ENCODE measurements at regions of chr19 and their contacts with region 1.

Region 1: DNA sequence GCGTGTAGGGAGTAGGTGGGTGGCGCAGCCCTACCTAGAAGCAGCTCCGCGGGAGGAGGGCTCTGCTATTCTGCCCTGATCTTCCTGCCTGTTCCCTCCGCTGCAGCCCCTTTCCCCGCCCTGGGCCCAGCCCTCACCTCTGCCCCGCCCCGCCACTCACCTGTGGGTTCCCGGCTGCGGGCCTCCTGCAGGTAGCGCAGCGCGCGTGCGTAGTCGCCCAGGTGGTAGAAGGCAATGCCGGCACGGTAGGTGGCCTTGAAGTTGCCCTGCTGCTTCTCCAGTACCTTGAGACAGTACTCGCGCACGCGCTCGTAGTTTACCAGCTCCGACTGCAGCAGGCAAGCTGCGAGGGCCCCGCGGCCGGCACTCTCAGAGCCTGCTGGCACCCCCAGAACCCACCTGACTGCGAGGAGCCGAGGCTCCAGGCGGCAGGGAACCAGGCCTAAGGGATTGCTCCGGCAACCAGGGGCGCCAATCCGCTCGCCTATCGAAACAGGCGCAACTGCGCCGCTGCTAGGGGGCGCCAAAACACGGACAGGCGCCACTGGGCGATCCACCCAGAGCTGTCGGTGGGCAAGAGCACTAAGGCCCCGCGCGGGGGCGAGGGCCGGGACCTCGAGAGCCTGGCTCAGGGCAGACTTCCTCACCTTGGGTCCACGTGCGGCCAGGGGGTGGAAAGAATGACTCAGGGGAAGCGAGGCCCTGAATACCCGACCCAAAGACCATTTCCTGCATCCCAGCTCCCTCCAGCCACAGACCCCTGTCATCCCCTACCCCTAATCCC is 965 bp downstream of the TTC9B start:
- DNase-seq: peak; percentile 82
- ATAC-seq: peak; percentile 60
- H3K4me3 Mint-ChIP-seq: peak overlapping the region; percentile 50
- H3K27ac Mint-ChIP-seq: no peak overlapping the region
- H3K4me1 Mint-ChIP-seq: peaks cover 11% of the 10 kb centered on the region
- H3K27me3 Mint-ChIP-seq: peaks cover 44% of the 10 kb centered on the region
- CTCF ChIP-seq: peak; percentile 65

Region 2: DNA sequence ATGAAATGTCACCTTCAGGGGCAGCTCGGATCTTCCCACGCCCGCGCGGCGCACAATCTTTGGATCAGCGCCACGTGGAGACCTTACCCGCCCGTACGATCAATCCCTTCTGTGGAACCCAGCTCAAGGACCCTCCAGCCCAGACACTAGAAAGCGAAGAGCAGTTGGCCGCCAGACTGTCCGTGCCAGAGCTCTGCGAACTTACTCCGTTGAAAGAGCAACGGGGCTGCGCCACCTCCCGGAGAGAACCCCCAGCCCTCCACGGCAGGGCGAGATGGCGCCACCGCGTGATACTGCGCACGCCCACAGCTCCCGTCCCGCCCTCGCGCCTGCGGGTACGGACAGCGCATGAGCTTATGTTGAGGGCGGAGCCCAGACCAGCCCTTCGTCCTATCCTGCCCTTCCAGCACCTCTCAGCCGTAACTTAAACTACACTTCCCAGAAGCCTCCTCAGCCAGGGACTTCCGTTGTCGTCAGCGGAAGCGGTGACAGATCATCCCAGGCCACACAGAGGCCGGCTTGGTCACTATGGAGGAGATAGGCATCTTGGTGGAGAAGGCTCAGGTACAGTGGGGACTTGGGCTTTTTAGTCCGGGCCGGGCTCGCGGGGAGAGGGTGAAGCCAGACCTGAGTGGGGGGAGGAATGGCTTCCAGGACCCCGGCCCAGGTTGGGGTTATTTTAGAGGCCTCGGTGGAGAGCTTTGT is 246.4 kb before region 1 on chr19 and contains the start of gene PSMC4:
- CTCF ChIA-PET with region 1: interaction called, 16 read pairs
- POLR2A ChIA-PET with region 1: no interaction called
- DNase-seq: peak; percentile 97
- ATAC-seq: peak; percentile 100
- H3K4me3 Mint-ChIP-seq: peak within 1 kb of the TSS; percentile 97
- H3K27ac Mint-ChIP-seq: peak within 1 kb of the TSS; percentile 96
- H3K4me1 Mint-ChIP-seq: peaks cover 25% of the 10 kb centered on the region
- H3K27me3 Mint-ChIP-seq: no peaks in the 10 kb centered on the region
- CTCF ChIP-seq: no peak
- total RNA-seq, gene PSMC4: 96.7 to 105 TPM (median 97.2 TPM) in 3 replicates

Region 3: GRCh38 chr19:40119380-40119779 is 97.8 kb before region 1 on chr19:
- CTCF ChIA-PET with region 1: no interaction called
- POLR2A ChIA-PET with region 1: no interaction called
- DNase-seq: no peak
- ATAC-seq: no peak
- H3K4me3 Mint-ChIP-seq: no peak overlapping the region
- H3K27ac Mint-ChIP-seq: no peak overlapping the region
- H3K4me1 Mint-ChIP-seq: no peaks in the 10 kb centered on the region
- H3K27me3 Mint-ChIP-seq: peaks cover 14% of the 10 kb centered on the region
- CTCF ChIP-seq: no peak

Region 4: DNA sequence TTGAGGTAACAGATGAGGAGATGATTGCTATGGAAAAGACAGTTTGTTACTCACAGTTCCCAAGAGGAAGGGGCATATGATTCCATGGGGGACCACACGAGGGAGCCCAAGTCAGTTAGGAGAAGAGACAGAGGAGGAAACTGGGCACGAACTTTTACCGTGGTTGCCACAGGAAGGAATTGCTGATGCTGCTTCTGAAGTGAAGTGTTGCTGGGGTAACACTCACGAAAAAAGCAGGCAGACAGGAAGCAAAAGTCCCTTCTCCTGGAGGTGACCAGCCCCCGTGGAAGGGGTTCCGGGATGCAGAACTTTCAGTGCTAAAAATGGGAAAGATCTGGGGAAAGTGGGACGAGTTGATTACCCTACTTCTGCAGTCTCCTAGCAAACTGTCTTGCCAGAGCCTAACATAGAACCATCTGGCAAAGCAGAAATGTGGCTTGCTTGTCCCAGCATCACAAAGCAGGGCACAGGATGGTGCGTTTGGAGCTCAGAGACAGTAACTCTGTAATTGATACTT is 61.4 kb before region 1 on chr19:
- CTCF ChIA-PET with region 1: interaction called, 16 read pairs
- POLR2A ChIA-PET with region 1: no interaction called
- DNase-seq: peak; percentile 28
- ATAC-seq: peak; percentile 41; the same call in 1 of the 2 replicates
- H3K4me3 Mint-ChIP-seq: no peak overlapping the region
- H3K27ac Mint-ChIP-seq: no peak overlapping the region
- H3K4me1 Mint-ChIP-seq: no peaks in the 10 kb centered on the region
- H3K27me3 Mint-ChIP-seq: no peaks in the 10 kb centered on the region; the same call in 1 of the 2 replicates
- CTCF ChIP-seq: no peak

Region 5: DNA sequence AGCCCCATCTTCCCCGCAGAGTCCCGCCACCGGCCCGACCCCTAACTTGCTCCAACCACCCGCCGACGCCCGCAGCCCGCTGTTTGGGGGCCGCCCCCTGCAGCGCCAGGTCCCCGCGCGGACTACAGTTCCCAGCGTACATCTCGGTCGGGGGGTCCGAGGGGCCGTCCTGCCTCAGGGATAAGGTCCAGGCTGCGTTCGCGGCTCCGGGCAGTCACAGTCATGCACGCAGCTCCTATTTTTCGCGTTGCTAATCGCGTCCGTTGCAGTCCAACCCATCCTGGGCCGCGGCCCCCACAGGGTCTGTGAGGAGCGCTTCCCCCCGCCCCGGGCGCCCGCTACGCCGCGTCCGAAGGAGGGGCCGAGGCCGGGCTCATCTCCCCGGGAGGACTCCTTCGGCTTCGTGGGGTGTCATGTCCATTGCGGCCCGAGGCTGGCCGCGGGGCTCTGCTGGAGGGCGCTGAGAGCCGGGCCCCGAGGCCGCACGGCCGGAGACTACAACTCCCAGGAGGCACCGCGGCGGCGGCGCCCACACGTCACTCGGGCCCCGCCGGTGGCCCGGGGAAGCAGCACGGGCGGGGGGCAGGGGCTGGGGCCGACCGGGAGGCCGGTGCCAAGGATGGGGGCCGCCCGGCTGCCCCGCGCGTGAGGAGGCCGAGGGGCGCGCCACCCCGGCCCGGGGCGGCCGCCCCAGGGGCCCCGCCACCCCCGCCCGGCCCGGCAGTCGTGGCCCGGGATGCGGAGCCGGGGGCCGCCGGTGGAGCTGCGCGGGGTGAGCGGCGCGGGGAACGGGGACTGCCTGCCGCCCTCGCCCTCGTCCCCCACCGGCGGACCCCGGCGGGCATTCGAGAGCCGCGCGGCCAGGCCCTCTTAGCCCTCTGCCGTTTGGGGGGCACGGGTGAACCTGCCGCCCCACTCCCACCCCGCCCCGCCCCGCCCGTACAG is 26.1 kb before region 1 on chr19 and contains the start of gene MAP3K10:
- CTCF ChIA-PET with region 1: interaction called, 67 read pairs
- POLR2A ChIA-PET with region 1: interaction called, 3 read pairs
- DNase-seq: peak; percentile 68
- ATAC-seq: peak; percentile 74
- H3K4me3 Mint-ChIP-seq: peak within 1 kb of the TSS; percentile 78
- H3K27ac Mint-ChIP-seq: no peak within 1 kb of the TSS
- H3K4me1 Mint-ChIP-seq: peaks cover 18% of the 10 kb centered on the region
- H3K27me3 Mint-ChIP-seq: peaks cover 15% of the 10 kb centered on the region; the same call in 1 of the 2 replicates
- CTCF ChIP-seq: no peak
- total RNA-seq, gene MAP3K10: 23.5 to 25.5 TPM (median 24.4 TPM) in 3 replicates

Region 6: GRCh38 chr19:40205760-40206159 is 11.5 kb before region 1 on chr19:
- CTCF ChIA-PET with region 1: interaction called, 26 read pairs
- POLR2A ChIA-PET with region 1: no interaction called
- DNase-seq: no peak
- ATAC-seq: no peak; the same call in 1 of the 2 replicates
- H3K4me3 Mint-ChIP-seq: no peak overlapping the region
- H3K27ac Mint-ChIP-seq: no peak overlapping the region
- H3K4me1 Mint-ChIP-seq: peaks cover 5% of the 10 kb centered on the region
- H3K27me3 Mint-ChIP-seq: no peaks in the 10 kb centered on the region
- CTCF ChIP-seq: no peak

Region 7: GRCh38 chr19:40252395-40252794 is 35.2 kb after region 1 on chr19:
- CTCF ChIA-PET with region 1: interaction called, 20 read pairs
- POLR2A ChIA-PET with region 1: no interaction called
- DNase-seq: no peak
- ATAC-seq: peak; percentile 92
- H3K4me3 Mint-ChIP-seq: no peak overlapping the region
- H3K27ac Mint-ChIP-seq: peak overlapping the region; percentile 82
- H3K4me1 Mint-ChIP-seq: peaks cover 16% of the 10 kb centered on the region
- H3K27me3 Mint-ChIP-seq: no peaks in the 10 kb centered on the region
- CTCF ChIP-seq: no peak

Region 8: DNA sequence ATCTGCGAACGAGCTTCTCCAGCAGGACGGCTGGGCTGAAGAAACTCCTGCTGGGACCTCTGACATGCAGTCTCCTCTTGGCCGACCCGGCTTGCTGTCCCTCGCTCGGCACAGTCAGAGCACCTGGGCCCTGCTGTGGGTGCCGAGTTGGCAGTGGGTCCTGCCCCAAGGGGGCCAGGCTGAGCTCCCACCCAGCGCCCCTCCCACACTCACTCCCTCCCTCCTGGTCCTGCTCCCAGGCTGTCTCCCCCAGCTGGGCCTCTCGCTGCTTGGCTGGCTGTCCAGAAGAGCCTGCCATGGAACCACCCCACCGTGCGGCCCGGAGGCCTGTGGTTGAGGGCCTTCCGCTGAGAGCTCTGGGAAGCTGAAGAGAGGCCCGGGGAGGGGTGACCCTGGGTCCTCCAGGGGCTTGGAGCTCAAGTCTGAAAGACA is 61.9 kb after region 1 on chr19:
- CTCF ChIA-PET with region 1: interaction called, 12 read pairs
- POLR2A ChIA-PET with region 1: no interaction called
- DNase-seq: no peak
- ATAC-seq: no peak
- H3K4me3 Mint-ChIP-seq: no peak overlapping the region
- H3K27ac Mint-ChIP-seq: no peak overlapping the region
- H3K4me1 Mint-ChIP-seq: peaks cover 32% of the 10 kb centered on the region
- H3K27me3 Mint-ChIP-seq: no peaks in the 10 kb centered on the region
- CTCF ChIP-seq: no peak

Region 9: DNA sequence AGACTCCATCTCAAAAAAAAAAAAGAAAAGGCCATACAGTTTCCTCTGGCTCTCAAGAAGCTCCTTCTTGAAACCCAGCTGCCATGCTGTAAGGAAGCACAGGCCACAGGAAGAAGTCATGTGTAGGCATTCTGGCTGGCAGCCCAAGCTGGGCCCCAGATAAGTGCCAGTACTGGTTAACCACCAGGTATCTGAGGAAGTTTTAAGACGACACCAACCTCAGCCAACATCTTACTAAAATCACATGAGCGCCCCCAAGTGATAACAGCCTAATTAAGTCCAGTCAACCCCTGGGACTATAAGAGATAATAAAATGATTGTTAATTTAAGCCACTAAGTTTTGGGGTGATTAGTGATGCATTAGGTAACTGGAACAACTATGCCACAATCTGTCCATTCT is 95.3 kb after region 1 on chr19:
- CTCF ChIA-PET with region 1: no interaction called
- POLR2A ChIA-PET with region 1: no interaction called
- DNase-seq: no peak
- ATAC-seq: peak; percentile 66
- H3K4me3 Mint-ChIP-seq: no peak overlapping the region
- H3K27ac Mint-ChIP-seq: no peak overlapping the region
- H3K4me1 Mint-ChIP-seq: no peaks in the 10 kb centered on the region
- H3K27me3 Mint-ChIP-seq: no peaks in the 10 kb centered on the region
- CTCF ChIP-seq: no peak

Measured in WTC11 (cell line).